ENCODE measurements at regions of chr7 and their contacts with region 1.

Region 1: DNA sequence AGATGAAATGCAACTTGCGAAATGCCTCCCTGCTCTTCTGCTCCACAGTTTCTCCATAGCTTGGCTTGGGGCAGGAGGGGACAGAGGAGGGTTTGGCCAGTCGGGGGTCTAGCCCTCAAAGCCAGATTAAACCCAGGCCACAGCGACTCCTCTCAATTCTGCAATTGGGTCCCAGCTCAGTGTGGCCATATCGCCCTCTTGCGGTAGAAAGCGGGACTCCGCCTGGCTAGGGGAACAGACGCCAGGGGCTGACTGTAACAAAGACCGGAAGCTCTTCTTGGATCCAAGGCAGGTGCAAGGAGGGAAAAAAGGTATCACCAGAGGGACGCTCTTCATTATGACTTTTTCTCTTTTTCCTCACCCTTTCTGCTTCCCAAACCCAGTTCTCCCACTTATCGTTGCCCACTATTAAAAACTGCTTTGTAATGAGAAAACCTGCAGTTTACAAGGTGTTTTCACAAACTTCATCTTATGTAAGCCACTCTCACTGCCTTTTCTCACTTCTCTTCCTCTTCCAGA is 36.6 kb upstream of the TNPO3 start:
- DNase-seq: peak; percentile 90
- ATAC-seq: peak; percentile 85
- H3K4me3 Mint-ChIP-seq: peak overlapping the region; percentile 36
- H3K27ac Mint-ChIP-seq: peak overlapping the region; percentile 79
- H3K4me1 Mint-ChIP-seq: peaks cover 40% of the 10 kb centered on the region
- H3K27me3 Mint-ChIP-seq: no peaks in the 10 kb centered on the region
- CTCF ChIP-seq: peak; percentile 60

Region 2: DNA sequence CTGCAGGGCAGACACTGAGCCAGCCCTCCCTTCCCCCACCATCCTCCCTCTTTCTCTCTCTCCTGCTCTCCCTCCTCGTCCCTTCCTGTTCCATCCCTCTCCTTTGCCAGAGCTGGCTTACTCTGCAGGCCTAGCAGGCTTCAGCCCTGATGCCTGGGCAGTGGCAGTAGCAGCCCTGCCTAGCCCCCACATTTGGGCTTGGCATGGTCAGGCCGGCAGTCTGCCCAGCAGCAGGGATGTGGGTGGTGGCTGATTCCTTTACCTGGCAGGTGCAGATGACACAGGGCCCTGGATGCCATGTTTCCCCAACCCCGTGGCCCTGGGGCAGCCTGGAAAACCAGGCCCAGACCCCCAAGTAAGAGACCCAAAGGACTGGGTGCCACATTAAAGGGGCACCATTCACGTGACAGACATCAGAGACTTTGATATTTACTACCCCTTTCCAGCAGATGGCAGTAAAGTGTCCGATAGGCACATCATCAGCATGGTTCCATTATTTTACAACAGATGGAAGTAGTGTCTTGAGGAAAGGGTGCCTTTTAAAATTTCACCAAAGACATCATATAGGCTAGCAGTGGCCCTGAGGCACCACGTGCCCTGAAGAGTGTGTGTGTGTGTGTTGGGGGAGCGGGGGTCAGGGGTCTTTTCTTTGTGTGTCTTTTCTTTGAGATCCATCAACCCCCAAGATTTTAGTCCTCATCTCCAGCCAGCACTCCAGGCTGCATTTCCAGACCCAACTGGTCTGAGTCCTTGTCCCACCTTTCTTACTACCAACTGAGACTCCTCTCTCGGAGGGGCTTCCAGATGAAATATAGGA is 187.0 kb before region 1 on chr7:
- CTCF ChIA-PET with region 1: interaction called, 18 read pairs
- POLR2A ChIA-PET with region 1: no interaction called
- intact Hi-C with region 1: loop called (anchors 1 kb)
- DNase-seq: no peak
- ATAC-seq: peak; percentile 90
- H3K4me3 Mint-ChIP-seq: no peak overlapping the region
- H3K27ac Mint-ChIP-seq: no peak overlapping the region
- H3K4me1 Mint-ChIP-seq: peaks cover 8% of the 10 kb centered on the region
- H3K27me3 Mint-ChIP-seq: peaks cover 7% of the 10 kb centered on the region
- CTCF ChIP-seq: no peak

Region 3: DNA sequence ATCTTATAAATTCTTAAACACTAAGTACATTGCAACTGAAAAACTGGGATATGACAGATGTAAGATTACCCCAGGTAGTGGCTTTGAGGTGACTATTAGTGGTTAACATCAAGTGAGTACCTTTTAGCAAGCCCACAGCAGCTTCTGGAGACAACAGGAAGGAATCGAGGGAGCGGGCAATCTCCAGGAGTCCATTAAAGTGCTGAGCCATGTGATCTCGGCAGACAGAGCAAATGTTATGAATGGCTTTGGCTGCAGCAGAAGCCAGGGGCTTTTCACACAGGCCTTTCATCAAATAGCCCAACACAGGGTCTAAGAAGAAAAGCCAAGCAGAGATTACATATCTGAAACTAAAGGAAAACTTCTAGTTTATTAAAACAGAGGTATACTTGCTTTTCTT is 104.9 kb before region 1 on chr7:
- CTCF ChIA-PET with region 1: no interaction called
- POLR2A ChIA-PET with region 1: no interaction called
- intact Hi-C with region 1: loop called (anchors 5 kb)
- DNase-seq: no peak
- ATAC-seq: no peak
- H3K4me3 Mint-ChIP-seq: no peak overlapping the region
- H3K27ac Mint-ChIP-seq: no peak overlapping the region
- H3K4me1 Mint-ChIP-seq: no peaks in the 10 kb centered on the region
- H3K27me3 Mint-ChIP-seq: no peaks in the 10 kb centered on the region
- CTCF ChIP-seq: no peak

Region 4: GRCh38 chr7:129054438-129055293 is 36.9 kb before region 1 on chr7 and contains the start of gene TNPO3:
- CTCF ChIA-PET with region 1: interaction called, 18 read pairs
- POLR2A ChIA-PET with region 1: interaction called, 9 read pairs
- intact Hi-C with region 1: loop called (anchors 2 kb)
- DNase-seq: peak; percentile 85
- ATAC-seq: peak; percentile 84
- H3K4me3 Mint-ChIP-seq: peak within 1 kb of the TSS; percentile 99
- H3K27ac Mint-ChIP-seq: peak within 1 kb of the TSS; percentile 99
- H3K4me1 Mint-ChIP-seq: peaks cover 47% of the 10 kb centered on the region
- H3K27me3 Mint-ChIP-seq: no peaks in the 10 kb centered on the region
- CTCF ChIP-seq: no peak
- total RNA-seq, gene TNPO3: 50.8 and 56.2 TPM in 2 replicates

Region 5: DNA sequence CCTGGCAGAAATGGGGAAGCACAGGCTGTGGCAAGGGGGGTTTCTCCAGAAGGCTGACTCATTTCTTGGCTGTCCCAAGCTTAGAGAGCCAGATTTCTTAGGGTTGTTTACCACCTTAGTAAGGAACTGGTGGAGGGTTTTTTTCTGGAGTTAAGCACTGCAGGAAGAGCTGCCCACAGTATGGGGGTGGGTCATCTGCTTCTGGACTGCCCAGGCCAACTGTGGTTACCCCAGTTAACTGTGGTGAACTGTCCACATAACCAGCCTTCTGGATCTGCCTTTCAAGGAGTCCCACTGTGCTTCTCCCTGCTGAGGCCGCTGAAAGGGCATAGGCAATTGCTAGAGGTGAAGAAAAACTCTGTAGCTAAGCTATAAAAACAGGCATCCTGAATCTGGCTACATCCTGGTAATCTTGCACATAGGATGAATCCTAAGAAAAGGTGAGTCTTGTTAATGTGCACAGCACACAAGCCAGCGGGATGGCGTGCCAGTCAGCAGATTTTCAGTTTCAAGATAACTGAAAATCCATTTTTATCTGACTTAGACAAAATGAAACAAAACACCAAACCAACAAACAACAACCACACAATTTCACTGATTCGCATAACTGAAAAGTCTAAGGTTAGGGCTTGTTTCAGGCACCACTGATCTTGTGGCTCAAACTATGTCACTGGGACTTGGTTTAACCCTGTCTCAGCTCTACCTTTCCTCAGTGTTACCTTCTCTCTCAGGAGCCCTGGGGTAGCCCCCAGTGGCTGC is 31.4 kb after region 1 on chr7:
- CTCF ChIA-PET with region 1: interaction called, 11 read pairs
- POLR2A ChIA-PET with region 1: interaction called, 26 read pairs
- intact Hi-C with region 1: loop called (anchors 1 kb)
- DNase-seq: peak; percentile 53
- ATAC-seq: peak; percentile 89
- H3K4me3 Mint-ChIP-seq: peak overlapping the region; percentile 73
- H3K27ac Mint-ChIP-seq: peak overlapping the region; percentile 96
- H3K4me1 Mint-ChIP-seq: peaks cover 40% of the 10 kb centered on the region
- H3K27me3 Mint-ChIP-seq: no peaks in the 10 kb centered on the region
- CTCF ChIP-seq: no peak

Region 6: DNA sequence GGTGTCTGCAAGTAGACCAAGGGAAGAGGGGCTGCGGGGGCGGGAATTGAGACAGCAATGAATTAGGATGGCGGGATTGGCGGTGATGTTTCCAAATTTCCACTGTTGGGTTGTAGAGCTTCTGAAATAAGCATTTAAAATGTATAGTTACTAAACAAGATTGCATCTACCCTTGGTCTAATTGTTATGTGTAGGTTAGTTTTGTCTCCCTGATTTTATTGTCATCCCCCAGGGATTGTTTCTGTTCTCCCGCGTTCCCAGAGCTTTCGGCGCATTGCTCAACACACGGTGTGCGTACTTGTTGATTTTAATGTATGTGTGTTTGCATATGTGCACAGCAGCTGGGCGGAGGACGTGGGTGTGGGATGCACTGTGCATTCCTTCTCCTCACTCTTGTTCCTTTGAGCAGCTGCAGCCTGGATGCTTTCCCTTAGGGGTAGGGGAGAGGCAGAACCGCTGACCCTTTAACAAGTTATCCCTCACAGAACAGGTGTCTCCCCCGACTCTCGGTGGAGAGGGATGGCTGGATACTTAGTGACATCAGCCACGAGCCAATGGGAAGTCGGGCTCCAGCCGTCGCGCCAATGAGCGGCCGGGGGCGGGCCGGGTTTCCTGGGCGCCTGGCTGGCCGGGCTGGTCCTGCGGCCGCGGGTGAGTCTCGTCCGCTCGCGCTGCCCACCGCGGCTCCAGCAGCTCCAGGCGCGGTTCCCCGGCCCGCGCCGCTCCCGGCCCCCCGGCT is 52.7 kb after region 1 on chr7 and contains the start of gene TSPAN33:
- CTCF ChIA-PET with region 1: interaction called, 44 read pairs
- POLR2A ChIA-PET with region 1: interaction called, 38 read pairs
- intact Hi-C with region 1: loop called (anchors 1 kb)
- DNase-seq: peak; percentile 75
- ATAC-seq: peak; percentile 62
- H3K4me3 Mint-ChIP-seq: peak within 1 kb of the TSS; percentile 98
- H3K27ac Mint-ChIP-seq: peak within 1 kb of the TSS; percentile 99
- H3K4me1 Mint-ChIP-seq: peaks cover 48% of the 10 kb centered on the region
- H3K27me3 Mint-ChIP-seq: no peaks in the 10 kb centered on the region
- CTCF ChIP-seq: no peak
- total RNA-seq, gene TSPAN33: 332 and 341 TPM in 2 replicates

Region 7: GRCh38 chr7:129210256-129210988 is 118.9 kb after region 1 on chr7:
- CTCF ChIA-PET with region 1: interaction called, 22 read pairs
- POLR2A ChIA-PET with region 1: no interaction called
- intact Hi-C with region 1: loop called (anchors 1 kb)
- DNase-seq: peak; percentile 77
- ATAC-seq: peak; percentile 91
- H3K4me3 Mint-ChIP-seq: no peak overlapping the region
- H3K27ac Mint-ChIP-seq: no peak overlapping the region
- H3K4me1 Mint-ChIP-seq: peaks cover 5% of the 10 kb centered on the region
- H3K27me3 Mint-ChIP-seq: no peaks in the 10 kb centered on the region
- CTCF ChIP-seq: peak; percentile 66

Region 8: GRCh38 chr7:129607457-129608120 is 516.0 kb after region 1 on chr7:
- CTCF ChIA-PET with region 1: no interaction called
- POLR2A ChIA-PET with region 1: no interaction called
- intact Hi-C with region 1: no loop called
- DNase-seq: no peak
- ATAC-seq: no peak
- H3K4me3 Mint-ChIP-seq: no peak overlapping the region
- H3K27ac Mint-ChIP-seq: peak overlapping the region; percentile 85
- H3K4me1 Mint-ChIP-seq: peaks cover 40% of the 10 kb centered on the region
- H3K27me3 Mint-ChIP-seq: no peaks in the 10 kb centered on the region
- CTCF ChIP-seq: no peak